ENCODE measurements at regions of chr5 and their contacts with region 1.

Region 1: GRCh38 chr5:6765612-6766525 is 52.6 kb downstream of the TENT4A start:
- DNase-seq: peak; percentile 77 to 94
- H3K4me3 ChIP-seq: no peak overlapping the region; a peak in 1 of 8 replicates
- H3K27ac ChIP-seq: no peak overlapping the region
- H3K4me1 ChIP-seq: peaks cover 0 to 2% (median 1%) of the 10 kb centered on the region in 4 experiments; a peak in 2 of 7 replicates
- H3K27me3 ChIP-seq: no peaks in the 10 kb centered on the region
- CTCF ChIP-seq: peak in 2 of 3 experiments; percentile 90 to 95; a peak in 3 of 4 replicates
- EP300 ChIP-seq: no peak
- POLR2A ChIP-seq: peak in 1 of 2 experiments; percentile 29; a peak in 1 of 3 replicates
- RAD21 ChIP-seq: peak; percentile 90

Region 2: GRCh38 chr5:6753851-6754250 is 12.0 kb before region 1 on chr5:
- CTCF ChIA-PET with region 1: interaction called, 20 read pairs
- POLR2A ChIA-PET with region 1: no interaction called
- DNase-seq: no peak
- H3K4me3 ChIP-seq: no peak overlapping the region
- H3K27ac ChIP-seq: no peak overlapping the region
- H3K4me1 ChIP-seq: no peaks in the 10 kb centered on the region
- H3K27me3 ChIP-seq: no peaks in the 10 kb centered on the region
- CTCF ChIP-seq: no peak
- EP300 ChIP-seq: no peak
- POLR2A ChIP-seq: no peak
- RAD21 ChIP-seq: no peak

Region 3: DNA sequence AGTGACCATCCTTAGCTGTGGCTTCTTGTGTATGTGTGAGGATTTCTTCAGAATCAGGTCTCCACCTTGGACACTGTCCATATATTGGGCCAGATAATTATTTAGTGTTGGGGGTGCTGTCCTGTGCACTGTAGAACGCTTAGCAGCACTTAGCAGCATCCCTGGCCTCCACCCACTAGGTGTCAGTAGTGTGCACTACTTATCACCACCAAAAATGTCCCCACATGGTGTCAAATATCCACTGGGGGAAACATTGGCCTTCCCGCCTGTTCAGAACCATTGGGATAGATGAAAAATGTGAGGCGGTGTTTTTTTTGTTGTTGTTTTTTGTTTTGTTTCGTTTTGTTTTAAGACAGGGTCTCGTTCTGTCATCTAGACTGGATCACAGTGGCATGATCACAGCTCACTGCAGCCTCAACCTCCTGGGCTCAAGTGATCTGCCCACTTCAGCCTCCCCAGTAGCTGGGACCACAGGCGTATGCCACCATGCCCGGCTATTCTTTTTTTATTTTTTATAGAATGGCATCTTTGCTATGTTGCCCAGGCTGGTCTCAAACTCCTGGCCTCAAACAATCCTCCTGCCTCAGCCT is 15.0 kb after region 1 on chr5:
- CTCF ChIA-PET with region 1: interaction called, 23 read pairs
- POLR2A ChIA-PET with region 1: no interaction called
- DNase-seq: no peak
- H3K4me3 ChIP-seq: no peak overlapping the region
- H3K27ac ChIP-seq: no peak overlapping the region
- H3K4me1 ChIP-seq: no peaks in the 10 kb centered on the region
- H3K27me3 ChIP-seq: no peaks in the 10 kb centered on the region
- CTCF ChIP-seq: peak; percentile 62 to 78 (median 63)
- EP300 ChIP-seq: no peak
- POLR2A ChIP-seq: no peak
- RAD21 ChIP-seq: peak; percentile 6 to 35; a peak in 3 of 4 replicates

Region 4: GRCh38 chr5:6788956-6789649 is 23.2 kb after region 1 on chr5:
- CTCF ChIA-PET with region 1: interaction called, 53 read pairs
- POLR2A ChIA-PET with region 1: interaction called, 3 read pairs
- DNase-seq: peak in 1 of 2 experiments; percentile 68
- H3K4me3 ChIP-seq: no peak overlapping the region
- H3K27ac ChIP-seq: no peak overlapping the region
- H3K4me1 ChIP-seq: no peaks in the 10 kb centered on the region
- H3K27me3 ChIP-seq: no peaks in the 10 kb centered on the region
- CTCF ChIP-seq: peak; percentile 55 to 71 (median 69)
- EP300 ChIP-seq: no peak
- POLR2A ChIP-seq: no peak
- RAD21 ChIP-seq: peak; percentile 30 to 51; a peak in 3 of 4 replicates